Sciatic nerve (tissue), 2 donors: ENCODE measurements at regions of chr13 and their contacts with region 1.

Region 1: DNA sequence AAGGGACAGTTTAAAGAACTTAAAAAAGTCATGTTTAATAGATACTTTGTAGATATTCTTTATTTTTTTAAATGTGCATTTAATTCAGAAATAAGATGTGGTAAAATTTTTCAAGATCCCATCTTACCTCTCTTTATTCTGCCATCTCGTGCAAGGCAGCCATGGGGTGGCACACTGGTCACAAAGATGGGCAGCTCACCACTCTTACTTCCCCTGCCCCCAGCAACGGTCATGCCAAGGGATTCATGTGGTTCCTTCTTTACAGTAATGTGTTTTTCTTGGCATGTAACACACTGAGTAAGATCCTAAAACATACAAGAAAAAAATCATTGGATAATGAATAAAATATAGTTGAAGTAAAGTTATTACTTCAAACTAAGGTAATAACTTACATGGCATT is 64.2 kb downstream of the LNX2 start:
- DNase-seq: no peak
- ATAC-seq: no peak

Region 2: GRCh38 chr13:29170436-29171082 is 1614.5 kb after region 1 on chr13:
- intact Hi-C with region 1: loop called (anchors 10 kb)
- DNase-seq: no peak
- ATAC-seq: no peak